ENCODE measurements at regions of chr3 and their contacts with region 1.

Region 1: GRCh38 chr3:70108072-70108471 is 108.5 kb downstream of the SAMMSON start:
- DNase-seq: no peak
- ATAC-seq: no peak
- H3K4me3 ChIP-seq: no peak overlapping the region
- H3K4me3 Mint-ChIP-seq: no peak overlapping the region
- H3K27ac ChIP-seq: no peak overlapping the region
- H3K27ac Mint-ChIP-seq: no peak overlapping the region
- H3K4me1 ChIP-seq: no peaks in the 10 kb centered on the region
- H3K4me1 Mint-ChIP-seq: no peaks in the 10 kb centered on the region
- H3K27me3 ChIP-seq: no peaks in the 10 kb centered on the region
- H3K27me3 Mint-ChIP-seq: peaks cover 18% of the 10 kb centered on the region
- CTCF ChIP-seq: peak; percentile 41

Region 2: GRCh38 chr3:70040386-70040785 is 67.7 kb before region 1 on chr3:
- CTCF ChIA-PET with region 1: no interaction called
- POLR2A ChIA-PET with region 1: no interaction called
- intact Hi-C with region 1: no loop called
- DNase-seq: no peak
- ATAC-seq: no peak
- H3K4me3 ChIP-seq: no peak overlapping the region
- H3K4me3 Mint-ChIP-seq: no peak overlapping the region
- H3K27ac ChIP-seq: no peak overlapping the region
- H3K27ac Mint-ChIP-seq: no peak overlapping the region
- H3K4me1 ChIP-seq: no peaks in the 10 kb centered on the region
- H3K4me1 Mint-ChIP-seq: no peaks in the 10 kb centered on the region
- H3K27me3 ChIP-seq: no peaks in the 10 kb centered on the region
- H3K27me3 Mint-ChIP-seq: peaks cover 5% of the 10 kb centered on the region
- CTCF ChIP-seq: no peak

Region 3: GRCh38 chr3:70120357-70121121 is 12.5 kb after region 1 on chr3:
- CTCF ChIA-PET with region 1: interaction called, 19 read pairs
- POLR2A ChIA-PET with region 1: no interaction called
- intact Hi-C with region 1: no loop called
- DNase-seq: peak; percentile 62
- ATAC-seq: no peak
- H3K4me3 ChIP-seq: no peak overlapping the region
- H3K4me3 Mint-ChIP-seq: no peak overlapping the region
- H3K27ac ChIP-seq: no peak overlapping the region
- H3K27ac Mint-ChIP-seq: no peak overlapping the region
- H3K4me1 ChIP-seq: no peaks in the 10 kb centered on the region
- H3K4me1 Mint-ChIP-seq: no peaks in the 10 kb centered on the region
- H3K27me3 ChIP-seq: no peaks in the 10 kb centered on the region
- H3K27me3 Mint-ChIP-seq: peaks cover 20% of the 10 kb centered on the region
- CTCF ChIP-seq: peak; percentile 78

Measured in B cell (primary cell).